Lower leg skin (tissue), 4 donors: ENCODE measurements at regions of chr17 and their contacts with region 1.

Region 1: DNA sequence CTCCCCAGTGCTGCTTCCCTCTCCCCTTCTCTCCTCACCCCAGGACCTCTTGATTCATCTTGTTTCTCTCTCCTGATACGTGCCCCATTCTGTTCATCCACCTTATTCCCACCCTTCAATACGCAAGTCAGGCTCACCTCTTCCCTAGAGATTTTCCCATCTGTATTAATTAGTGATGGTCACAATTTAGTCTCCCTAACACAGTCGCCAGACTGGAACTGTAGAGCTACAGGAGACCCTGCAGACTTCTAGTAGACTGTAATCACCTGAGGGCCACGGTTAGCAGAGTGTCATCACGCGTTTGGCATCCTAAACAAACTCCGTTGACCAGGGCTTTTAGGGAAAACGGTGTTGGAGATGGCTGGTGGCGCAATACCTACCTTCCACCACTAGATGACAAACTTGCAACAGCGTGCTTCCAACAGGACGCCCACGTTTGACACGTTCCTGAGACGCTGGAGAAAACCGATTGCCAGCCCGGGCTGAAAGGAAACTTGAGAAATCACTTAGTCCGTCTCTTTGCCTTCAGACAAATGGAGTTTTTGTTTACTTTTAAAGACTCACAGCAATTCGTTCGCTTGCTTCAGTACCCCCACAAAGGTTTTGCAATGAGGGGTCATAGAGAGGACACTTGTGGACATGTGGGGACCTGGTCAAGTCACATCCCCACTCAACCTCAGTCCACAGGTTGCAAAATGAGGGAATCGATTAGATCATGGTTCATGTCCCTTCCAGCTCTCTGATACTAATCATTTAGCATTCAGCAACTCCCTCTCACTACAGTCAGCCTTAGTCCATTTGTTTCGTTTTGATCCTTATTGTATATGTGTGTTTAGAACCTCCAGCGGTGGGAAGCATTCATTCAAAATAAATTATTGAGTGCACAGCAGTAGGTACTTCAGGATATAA is 20.6 kb downstream of the MYL4 start:
- DNase-seq: peak; percentile 91 to 98
- H3K4me3 ChIP-seq: no peak overlapping the region
- CTCF ChIP-seq: peak in 1 of 3 donors; percentile 98
- POLR2A ChIP-seq: no peak

Region 2: DNA sequence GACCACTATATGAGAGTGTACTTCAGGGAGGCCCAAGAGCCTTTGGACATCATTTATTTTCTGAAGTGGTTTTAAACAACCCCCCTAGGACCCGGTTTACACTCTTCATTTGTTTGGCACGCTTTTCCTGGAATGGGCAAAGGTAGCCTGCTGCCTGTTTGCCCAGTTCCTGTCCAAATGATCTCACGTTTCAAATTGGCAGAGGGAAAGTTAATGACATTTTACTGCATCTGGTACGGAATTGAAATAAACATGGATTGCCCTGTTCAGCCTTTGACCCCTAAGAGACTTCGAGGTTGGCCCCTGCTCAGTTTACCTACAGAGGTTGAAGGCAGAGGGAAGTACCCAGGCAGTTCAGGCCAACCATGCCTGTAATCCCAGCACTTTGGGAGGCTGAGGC is 244.9 kb before region 1 on chr17:
- intact Hi-C with region 1: no loop called
- DNase-seq: no peak
- H3K4me3 ChIP-seq: no peak overlapping the region
- CTCF ChIP-seq: no peak
- POLR2A ChIP-seq: no peak

Region 3: DNA sequence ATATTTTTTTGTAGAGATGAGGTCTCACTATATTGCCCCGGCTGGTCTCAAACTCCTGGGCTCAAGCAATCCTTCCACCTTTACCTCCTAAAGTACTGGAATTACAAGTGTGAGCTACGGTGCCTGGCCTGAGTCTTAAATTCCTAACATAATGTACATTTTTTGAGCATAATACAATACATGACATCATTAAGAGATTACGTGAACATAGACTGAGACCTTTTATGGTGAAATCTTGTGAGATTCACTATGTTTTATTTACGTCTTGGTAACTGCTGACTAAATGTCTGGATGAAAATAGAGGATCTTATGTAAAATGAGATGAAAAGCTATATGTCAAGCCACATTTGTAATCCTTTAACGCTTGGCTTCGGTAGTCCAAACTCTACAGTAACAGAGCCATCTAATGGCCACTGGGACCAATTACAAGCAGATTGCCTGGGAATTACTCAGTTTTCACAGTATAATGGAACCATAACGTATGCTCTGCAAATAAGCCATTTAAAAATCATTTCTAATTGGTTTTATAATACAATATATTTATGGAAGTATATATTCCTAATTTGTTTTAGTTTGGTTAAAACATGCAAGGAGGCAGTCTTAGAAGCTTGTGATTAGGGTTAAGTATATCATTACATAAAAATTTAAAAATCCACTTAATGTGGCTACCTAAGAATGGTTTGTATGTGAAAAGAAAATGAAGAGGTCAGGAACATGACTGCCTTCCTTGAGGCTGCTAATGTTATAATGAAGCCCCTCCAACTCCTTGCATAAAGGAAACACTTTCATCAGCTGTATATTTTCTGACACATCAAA is 85.9 kb after region 1 on chr17:
- intact Hi-C with region 1: loop called (anchors 5 kb)
- DNase-seq: peak in 1 of 2 donors; percentile 52
- H3K4me3 ChIP-seq: no peak overlapping the region
- CTCF ChIP-seq: peak in 1 of 3 donors; percentile 84
- POLR2A ChIP-seq: no peak